ENCODE measurements at regions of chr4 and their contacts with region 1.

Region 1: GRCh38 chr4:36399762-36400353 is 118.4 kb downstream of the DTHD1 start:
- DNase-seq: peak; percentile 15
- H3K4me3 Mint-ChIP-seq: no peak overlapping the region
- H3K27ac Mint-ChIP-seq: no peak overlapping the region
- H3K4me1 Mint-ChIP-seq: peaks cover 30% of the 10 kb centered on the region
- H3K27me3 Mint-ChIP-seq: peaks cover 18% of the 10 kb centered on the region

Region 2: GRCh38 chr4:36208893-36209473 is 190.9 kb before region 1 on chr4:
- intact Hi-C with region 1: loop called (anchors 10 kb)
- DNase-seq: no peak
- H3K4me3 Mint-ChIP-seq: peak overlapping the region; percentile 13
- H3K27ac Mint-ChIP-seq: peak overlapping the region; percentile 74
- H3K4me1 Mint-ChIP-seq: peaks cover 46% of the 10 kb centered on the region
- H3K27me3 Mint-ChIP-seq: no peaks in the 10 kb centered on the region

Region 3: GRCh38 chr4:36224972-36225903 is 174.6 kb before region 1 on chr4:
- intact Hi-C with region 1: no loop called
- DNase-seq: no peak
- H3K4me3 Mint-ChIP-seq: no peak overlapping the region
- H3K27ac Mint-ChIP-seq: no peak overlapping the region
- H3K4me1 Mint-ChIP-seq: peaks cover 20% of the 10 kb centered on the region
- H3K27me3 Mint-ChIP-seq: no peaks in the 10 kb centered on the region

Region 4: DNA sequence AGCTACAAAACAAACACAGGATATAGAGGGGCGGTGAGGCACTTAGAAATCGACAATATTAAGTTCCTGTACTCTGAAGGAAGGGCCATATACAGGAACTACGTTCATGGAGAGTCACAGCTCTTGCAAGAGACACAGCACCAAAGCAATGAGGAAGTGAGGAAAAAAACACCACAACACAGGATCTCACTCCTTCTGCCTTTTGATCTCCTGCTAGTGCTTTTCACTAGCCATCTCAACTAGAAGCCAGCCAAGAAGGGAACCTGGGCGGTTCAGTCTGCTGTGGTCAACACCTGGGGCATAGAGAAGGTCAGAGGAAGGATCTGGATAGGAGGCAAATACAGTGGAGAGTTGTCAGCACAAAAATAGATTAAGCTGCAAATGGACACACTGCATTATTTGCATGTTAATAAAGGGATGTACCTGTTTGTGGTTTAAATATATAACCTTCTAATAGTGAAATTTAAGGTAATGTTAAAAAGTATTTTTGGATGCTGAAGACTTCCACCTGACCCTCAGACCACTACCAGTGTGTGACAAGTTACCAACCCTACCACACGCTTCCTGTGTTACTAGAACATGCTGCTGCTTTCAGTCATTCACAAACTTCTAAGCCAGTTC is 13.8 kb before region 1 on chr4:
- intact Hi-C with region 1: loop called (anchors 2 kb)
- DNase-seq: peak; percentile 18
- H3K4me3 Mint-ChIP-seq: no peak overlapping the region
- H3K27ac Mint-ChIP-seq: peak overlapping the region; percentile 70
- H3K4me1 Mint-ChIP-seq: peaks cover 15% of the 10 kb centered on the region
- H3K27me3 Mint-ChIP-seq: peaks cover 15% of the 10 kb centered on the region

Region 5: GRCh38 chr4:36609661-36610060 is 209.8 kb after region 1 on chr4:
- intact Hi-C with region 1: no loop called
- DNase-seq: no peak
- H3K4me3 Mint-ChIP-seq: no peak overlapping the region
- H3K27ac Mint-ChIP-seq: no peak overlapping the region
- H3K4me1 Mint-ChIP-seq: no peaks in the 10 kb centered on the region
- H3K27me3 Mint-ChIP-seq: no peaks in the 10 kb centered on the region

Region 6: DNA sequence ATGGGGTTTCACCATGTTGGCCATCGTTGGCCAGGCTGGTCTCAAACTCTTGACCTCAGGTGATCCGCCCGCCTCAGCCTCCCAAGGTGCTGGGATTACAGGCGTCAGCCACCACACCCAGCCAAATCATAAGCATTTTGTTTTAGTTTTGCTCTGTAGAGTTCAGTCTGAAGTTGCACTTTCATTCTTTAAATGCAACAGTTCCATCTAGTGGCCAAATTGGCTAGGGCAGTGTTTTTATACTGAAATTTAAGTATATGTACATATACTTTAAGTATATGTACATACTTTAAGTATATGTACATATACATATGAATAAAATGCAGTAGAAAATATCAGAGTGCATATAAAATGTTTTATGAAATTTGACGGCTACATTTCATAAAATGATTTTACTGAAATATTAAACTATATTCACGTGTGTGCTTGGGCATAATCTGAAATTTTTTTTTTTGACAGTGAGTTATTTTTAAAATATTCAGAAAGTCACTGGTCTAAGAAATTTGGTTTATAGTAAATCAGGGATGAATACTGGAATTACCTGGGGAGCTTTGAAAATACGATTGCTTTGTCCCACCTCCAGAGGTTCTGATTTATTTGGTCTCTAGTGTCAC is 990.2 kb after region 1 on chr4:
- intact Hi-C with region 1: loop called (anchors 10 kb)
- DNase-seq: no peak
- H3K4me3 Mint-ChIP-seq: no peak overlapping the region
- H3K27ac Mint-ChIP-seq: no peak overlapping the region
- H3K4me1 Mint-ChIP-seq: peaks cover 8% of the 10 kb centered on the region
- H3K27me3 Mint-ChIP-seq: peaks cover 2% of the 10 kb centered on the region

Measured in activated T-helper 2 cell treated with anti-CD3 and anti-CD28 coated beads, Interferon-gamma antibody, Interleukin-2, Interleukin-4, amounts not matched to agents 10 μg/mL and 5 μg/mL and 100 μg/mL, durations not matched to agents 14 hours and 24 hours and 36 hours (primary cell).